Activated CD8-positive, alpha-beta T cell treated with anti-CD3 and anti-CD28 coated beads for 36 hours (primary cell): ENCODE measurements at regions of chr15 and their contacts with region 1.

Region 1: GRCh38 chr15:51776952-51777574 is 25.7 kb downstream of the TMOD2 start:
- DNase-seq: peak; percentile 77
- ATAC-seq: peak; percentile 77
- H3K4me3 Mint-ChIP-seq: no peak overlapping the region
- H3K27ac Mint-ChIP-seq: no peak overlapping the region
- H3K4me1 Mint-ChIP-seq: peaks cover 6% of the 10 kb centered on the region
- H3K27me3 Mint-ChIP-seq: no peaks in the 10 kb centered on the region
- CTCF ChIP-seq: peak; percentile 64

Region 2: DNA sequence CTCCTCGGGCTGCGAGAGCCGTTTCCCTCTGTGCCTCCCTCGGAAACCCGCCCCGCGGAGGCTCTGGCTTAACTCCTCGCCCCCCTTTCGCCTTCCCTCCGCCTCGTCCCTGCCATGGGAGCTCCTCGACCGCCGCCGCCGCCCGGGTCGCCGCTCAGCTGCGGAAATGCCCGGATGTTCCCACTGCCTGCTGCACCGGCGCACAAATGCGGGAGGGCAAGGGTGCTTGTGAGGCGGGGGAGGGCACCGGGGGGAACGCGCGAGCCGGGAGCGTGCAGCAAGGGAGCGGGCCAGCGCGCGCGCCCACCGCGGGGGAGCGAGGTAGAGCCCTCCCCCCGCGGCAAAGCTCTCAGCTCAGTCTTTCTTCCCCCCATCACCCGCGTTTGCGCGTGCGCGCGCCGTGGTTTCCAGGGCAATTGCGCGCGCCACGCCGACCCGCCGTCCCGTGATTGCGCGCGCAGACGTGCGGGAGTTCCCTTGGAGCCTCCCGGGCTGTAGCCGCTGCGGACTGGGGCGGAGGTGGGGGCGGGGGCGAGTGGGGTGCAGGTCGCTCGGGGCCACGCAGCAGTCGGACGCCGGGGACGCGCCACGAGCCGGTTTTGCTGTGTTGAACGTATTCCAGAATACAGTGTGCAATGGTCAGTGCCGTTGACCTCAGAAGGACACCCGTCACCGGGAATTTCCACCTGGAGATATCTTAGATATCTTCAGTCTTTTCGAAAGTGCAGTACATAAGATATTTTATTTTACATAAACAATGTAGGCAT is 154.3 kb before region 1 on chr15 and contains the start of gene DMXL2:
- CTCF ChIA-PET with region 1: interaction called, 23 read pairs
- POLR2A ChIA-PET with region 1: no interaction called
- intact Hi-C with region 1: no loop called
- DNase-seq: peak; percentile 73
- ATAC-seq: peak; percentile 68
- H3K4me3 Mint-ChIP-seq: peak within 1 kb of the TSS; percentile 79
- H3K27ac Mint-ChIP-seq: peak within 1 kb of the TSS; percentile 68
- H3K4me1 Mint-ChIP-seq: peaks cover 20% of the 10 kb centered on the region
- H3K27me3 Mint-ChIP-seq: peaks cover 27% of the 10 kb centered on the region
- CTCF ChIP-seq: no peak
- total RNA-seq, gene DMXL2: 4.2 to 4.8 TPM

Region 3: DNA sequence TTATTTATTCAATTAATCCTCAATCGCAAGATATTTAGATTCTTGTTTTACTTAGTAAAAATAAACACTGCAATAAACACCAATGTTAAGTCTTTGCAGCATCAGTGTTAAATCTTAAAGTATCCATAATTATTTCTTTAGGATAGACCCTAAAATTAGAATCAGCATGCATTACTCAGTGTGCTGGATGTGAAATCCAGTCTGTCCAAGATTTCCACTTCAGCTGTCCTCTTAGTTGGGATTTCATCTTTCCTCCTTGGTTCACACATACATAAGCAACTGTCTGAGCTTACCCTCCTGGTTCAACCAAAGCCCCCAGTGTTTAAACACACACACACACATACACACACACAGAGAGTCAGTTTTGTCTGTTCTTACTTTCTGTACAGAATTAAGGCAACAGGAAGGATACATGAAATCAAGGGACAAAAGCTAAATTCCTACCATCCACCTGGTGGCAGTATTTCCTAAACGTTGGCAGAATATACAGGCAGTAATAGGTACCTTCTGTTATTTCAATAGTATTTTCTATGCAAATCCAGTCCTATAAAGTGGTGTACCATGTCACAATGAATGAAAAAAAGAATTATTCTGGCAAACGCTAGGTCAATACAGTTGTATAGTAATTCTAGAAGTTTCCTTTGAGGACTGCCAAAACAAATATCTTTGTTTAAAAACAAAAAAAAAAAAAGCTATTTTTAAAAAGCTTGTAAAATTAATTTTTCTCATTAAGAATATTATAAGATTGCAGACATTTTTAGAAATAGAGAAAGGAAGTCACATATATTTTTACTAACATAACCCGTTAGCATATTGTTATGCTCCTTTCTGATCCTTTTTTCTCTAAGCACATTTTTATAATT is 127.2 kb before region 1 on chr15:
- CTCF ChIA-PET with region 1: interaction called, 168 read pairs
- POLR2A ChIA-PET with region 1: interaction called, 7 read pairs
- intact Hi-C with region 1: loop called (anchors 1 kb)
- DNase-seq: peak; percentile 52
- ATAC-seq: peak; percentile 84
- H3K4me3 Mint-ChIP-seq: no peak overlapping the region
- H3K27ac Mint-ChIP-seq: no peak overlapping the region
- H3K4me1 Mint-ChIP-seq: no peaks in the 10 kb centered on the region
- H3K27me3 Mint-ChIP-seq: no peaks in the 10 kb centered on the region
- CTCF ChIP-seq: peak; percentile 90

Region 4: GRCh38 chr15:51681303-51681963 is 95.6 kb before region 1 on chr15 and contains the start of gene SCG3:
- CTCF ChIA-PET with region 1: interaction called, 16 read pairs
- POLR2A ChIA-PET with region 1: no interaction called
- intact Hi-C with region 1: no loop called
- DNase-seq: peak; percentile 83
- ATAC-seq: peak; percentile 99
- H3K4me3 Mint-ChIP-seq: no peak within 1 kb of the TSS
- H3K27ac Mint-ChIP-seq: no peak within 1 kb of the TSS
- H3K4me1 Mint-ChIP-seq: peaks cover 3% of the 10 kb centered on the region
- H3K27me3 Mint-ChIP-seq: peaks cover 35% of the 10 kb centered on the region
- CTCF ChIP-seq: no peak
- total RNA-seq, gene SCG3: not detected

Region 5: DNA sequence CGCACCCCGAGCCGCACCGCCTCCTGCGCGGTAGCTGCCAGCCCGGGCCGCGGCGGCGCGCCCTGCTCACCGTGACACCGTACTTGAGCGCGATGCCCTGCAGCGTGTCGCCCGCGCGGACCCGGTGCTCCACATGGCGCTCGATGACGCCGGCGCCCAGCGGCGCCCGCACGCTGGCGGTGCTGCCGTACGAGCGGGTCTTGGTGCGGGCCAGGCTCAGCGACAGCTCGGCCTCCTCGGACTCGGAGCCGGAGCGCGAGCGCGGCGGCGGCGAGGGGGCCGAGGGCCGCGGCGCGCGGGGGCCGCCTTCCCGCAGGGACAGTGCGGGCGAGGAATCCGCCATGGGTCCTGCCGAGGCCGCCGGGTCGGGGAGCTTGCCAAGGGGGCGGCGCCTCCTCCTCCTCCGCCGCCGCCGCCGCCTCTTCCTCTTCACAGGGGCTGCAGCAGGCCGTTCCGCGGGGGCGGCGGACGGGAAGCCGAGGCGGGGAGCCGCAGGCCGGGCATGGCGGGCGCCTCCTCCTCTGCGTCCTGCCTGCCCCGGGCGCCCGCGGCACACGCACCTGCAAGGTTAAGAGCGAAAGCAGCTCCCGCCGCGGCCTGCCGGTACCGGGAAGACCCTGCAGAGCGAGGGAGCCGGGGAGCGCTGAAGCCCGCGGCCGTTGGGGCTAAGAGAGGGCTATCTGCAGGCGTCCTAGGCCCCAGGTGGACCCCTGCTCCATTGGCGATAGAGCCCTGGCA is 39.6 kb before region 1 on chr15 and contains the start of gene LYSMD2:
- CTCF ChIA-PET with region 1: interaction called, 92 read pairs
- POLR2A ChIA-PET with region 1: interaction called, 3 read pairs
- intact Hi-C with region 1: loop called (anchors 2 kb)
- DNase-seq: peak; percentile 81
- ATAC-seq: peak; percentile 57
- H3K4me3 Mint-ChIP-seq: peak within 1 kb of the TSS; percentile 82
- H3K27ac Mint-ChIP-seq: peak within 1 kb of the TSS; percentile 87
- H3K4me1 Mint-ChIP-seq: peaks cover 47% of the 10 kb centered on the region
- H3K27me3 Mint-ChIP-seq: no peaks in the 10 kb centered on the region
- CTCF ChIP-seq: no peak
- total RNA-seq, gene LYSMD2: 18.5 to 19.0 TPM

Region 6: DNA sequence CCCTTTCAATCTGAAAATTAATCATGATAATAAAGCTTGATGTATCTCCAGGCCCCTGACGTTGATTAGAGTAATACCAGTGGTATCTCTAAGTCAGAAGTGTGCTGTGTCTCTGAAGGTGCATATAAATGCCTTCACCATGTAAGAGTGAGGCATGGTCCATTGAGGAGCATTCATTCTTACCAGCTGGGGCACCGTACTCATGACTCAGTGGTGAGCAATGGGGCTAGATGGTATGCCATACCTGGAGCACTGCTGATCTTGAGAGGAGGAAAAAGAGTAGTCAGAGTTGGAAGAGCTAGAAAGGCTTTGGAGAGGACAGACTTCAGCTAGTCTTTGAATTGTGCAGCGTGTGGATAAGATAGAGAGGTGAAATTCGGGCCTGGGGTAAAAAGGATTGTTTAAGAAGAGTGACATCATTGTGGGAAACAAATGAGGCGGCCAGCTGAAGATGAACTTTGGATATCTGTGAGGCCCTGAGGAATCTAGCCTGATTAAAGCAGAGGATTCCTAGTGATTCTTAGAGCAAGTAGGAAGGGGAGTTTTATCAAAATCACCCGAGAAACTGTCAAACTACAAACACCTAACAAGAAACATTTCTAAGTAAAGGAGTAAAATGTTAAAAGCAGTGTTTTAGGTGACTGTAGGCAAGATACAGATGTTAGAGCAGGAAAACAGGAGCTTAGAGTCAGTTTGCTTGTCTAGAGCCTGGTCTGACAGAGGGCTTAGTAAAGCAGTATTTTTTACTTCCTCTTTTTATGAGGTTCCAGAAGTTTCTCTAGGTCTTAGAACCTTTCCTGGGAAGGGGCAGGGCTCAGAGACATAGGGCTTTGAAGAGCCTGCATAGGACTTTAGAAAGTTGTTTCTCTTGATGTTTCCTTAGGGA is 66.0 kb after region 1 on chr15:
- CTCF ChIA-PET with region 1: interaction called, 10 read pairs
- POLR2A ChIA-PET with region 1: no interaction called
- intact Hi-C with region 1: no loop called
- DNase-seq: peak; percentile 42
- ATAC-seq: peak; percentile 52
- H3K4me3 Mint-ChIP-seq: no peak overlapping the region
- H3K27ac Mint-ChIP-seq: no peak overlapping the region
- H3K4me1 Mint-ChIP-seq: peaks cover 69% of the 10 kb centered on the region
- H3K27me3 Mint-ChIP-seq: no peaks in the 10 kb centered on the region
- CTCF ChIP-seq: no peak

Region 7: DNA sequence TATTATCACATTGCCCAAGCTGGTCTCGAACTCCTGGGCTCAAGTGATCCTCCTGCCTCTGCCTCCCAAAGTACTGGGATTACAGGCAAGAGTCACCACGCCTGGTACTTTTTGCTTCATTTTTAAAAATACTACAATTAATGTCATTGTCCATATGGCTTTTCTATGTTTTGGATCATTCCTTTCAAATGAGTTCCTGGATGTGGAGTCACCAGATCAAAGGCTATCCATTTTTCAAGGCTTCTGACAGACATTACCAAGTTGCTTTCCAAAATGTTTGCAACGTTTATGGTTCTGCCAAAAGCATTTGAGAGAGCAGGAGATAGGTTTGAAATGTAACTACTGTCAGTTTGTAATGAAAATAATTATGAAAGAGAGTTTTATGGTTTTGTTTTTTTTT is 369.7 kb after region 1 on chr15:
- CTCF ChIA-PET with region 1: no interaction called
- POLR2A ChIA-PET with region 1: no interaction called
- intact Hi-C with region 1: no loop called
- DNase-seq: no peak
- ATAC-seq: no peak
- H3K4me3 Mint-ChIP-seq: no peak overlapping the region
- H3K27ac Mint-ChIP-seq: no peak overlapping the region
- H3K4me1 Mint-ChIP-seq: no peaks in the 10 kb centered on the region
- H3K27me3 Mint-ChIP-seq: no peaks in the 10 kb centered on the region
- CTCF ChIP-seq: no peak